PC-9 (cell line): ENCODE measurements at regions of chr9 and their contacts with region 1.

Region 1: GRCh38 chr9:88534456-88535261 is at the start of gene NXNL2:
- DNase-seq: peak; percentile 55 to 90
- H3K4me3 ChIP-seq: peak within 1 kb of the TSS; percentile 67
- H3K27ac ChIP-seq: peak within 1 kb of the TSS; percentile 65
- H3K4me1 ChIP-seq: peaks cover 33% of the 10 kb centered on the region
- H3K27me3 ChIP-seq: no peaks in the 10 kb centered on the region
- CTCF ChIP-seq: no peak
- total RNA-seq, gene NXNL2: 5.5 and 8.7 TPM in 2 replicates

Region 2: DNA sequence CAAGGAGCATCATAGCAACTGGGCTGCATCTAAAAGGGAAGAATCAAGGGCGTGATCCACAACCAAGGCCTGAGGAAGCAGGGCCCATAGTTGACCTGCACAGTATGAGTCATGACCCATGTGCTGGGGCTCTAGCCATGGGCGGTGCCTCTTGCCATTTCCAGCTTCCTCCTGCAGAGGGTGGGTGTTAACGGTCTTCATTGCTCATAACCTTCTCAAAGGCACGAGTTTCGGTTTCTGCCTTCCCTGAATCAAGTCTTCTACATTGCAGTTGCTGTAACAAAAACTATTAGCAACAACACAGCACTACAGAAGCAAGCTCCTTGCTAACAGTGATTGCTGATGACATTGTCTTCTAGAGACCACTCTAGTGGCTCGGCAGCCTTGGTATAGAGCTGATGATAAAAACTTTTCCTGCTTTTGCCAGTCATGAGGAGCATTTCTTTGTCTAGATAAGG is 741.8 kb before region 1 on chr9:
- CTCF ChIA-PET with region 1: no interaction called
- POLR2A ChIA-PET with region 1: interaction called, 27 read pairs
- intact Hi-C with region 1: no loop called
- DNase-seq: peak; percentile 90 to 98
- H3K4me3 ChIP-seq: peak overlapping the region; percentile 48; the same call in 1 of the 2 replicates
- H3K27ac ChIP-seq: peak overlapping the region; percentile 100
- H3K4me1 ChIP-seq: peaks cover 70% of the 10 kb centered on the region
- H3K27me3 ChIP-seq: no peaks in the 10 kb centered on the region
- CTCF ChIP-seq: peak; percentile 54

Region 3: GRCh38 chr9:88280816-88281382 is 253.8 kb before region 1 on chr9:
- CTCF ChIA-PET with region 1: no interaction called
- POLR2A ChIA-PET with region 1: no interaction called
- intact Hi-C with region 1: loop called (anchors 2 kb)
- DNase-seq: peak; percentile 77 to 83
- H3K4me3 ChIP-seq: peak overlapping the region; percentile 14; the same call in 1 of the 2 replicates
- H3K27ac ChIP-seq: peak overlapping the region; percentile 60
- H3K4me1 ChIP-seq: peaks cover 30% of the 10 kb centered on the region
- H3K27me3 ChIP-seq: no peaks in the 10 kb centered on the region
- CTCF ChIP-seq: 0 out of 2 replicates have a peak, but pooled peaks have one; percentile 26

Region 4: GRCh38 chr9:88476491-88477271 is 58.0 kb before region 1 on chr9:
- CTCF ChIA-PET with region 1: no interaction called
- POLR2A ChIA-PET with region 1: no interaction called
- intact Hi-C with region 1: loop called (anchors 2 kb)
- DNase-seq: no peak
- H3K4me3 ChIP-seq: no peak overlapping the region
- H3K27ac ChIP-seq: 0 out of 2 replicates have a peak overlapping the region, but pooled peaks have one; percentile 30
- H3K4me1 ChIP-seq: peaks cover 19% of the 10 kb centered on the region
- H3K27me3 ChIP-seq: no peaks in the 10 kb centered on the region
- CTCF ChIP-seq: no peak

Region 5: GRCh38 chr9:88897081-88897480 is 362.4 kb after region 1 on chr9:
- CTCF ChIA-PET with region 1: no interaction called
- POLR2A ChIA-PET with region 1: interaction called, 12 read pairs
- intact Hi-C with region 1: no loop called
- DNase-seq: no peak
- H3K4me3 ChIP-seq: no peak overlapping the region
- H3K27ac ChIP-seq: no peak overlapping the region
- H3K4me1 ChIP-seq: no peaks in the 10 kb centered on the region
- H3K27me3 ChIP-seq: no peaks in the 10 kb centered on the region
- CTCF ChIP-seq: no peak